ENCODE measurements at regions of chrX and their contacts with region 1.

Region 1: GRCh38 chrX:37986893-37987292 is 19.5 kb upstream of the SYTL5 start:
- DNase-seq: no peak
- ATAC-seq: no peak

Region 2: GRCh38 chrX:37895795-37896510 is 90.9 kb before region 1 on chrX:
- intact Hi-C with region 1: no loop called
- DNase-seq: no peak
- ATAC-seq: no peak

Region 3: DNA sequence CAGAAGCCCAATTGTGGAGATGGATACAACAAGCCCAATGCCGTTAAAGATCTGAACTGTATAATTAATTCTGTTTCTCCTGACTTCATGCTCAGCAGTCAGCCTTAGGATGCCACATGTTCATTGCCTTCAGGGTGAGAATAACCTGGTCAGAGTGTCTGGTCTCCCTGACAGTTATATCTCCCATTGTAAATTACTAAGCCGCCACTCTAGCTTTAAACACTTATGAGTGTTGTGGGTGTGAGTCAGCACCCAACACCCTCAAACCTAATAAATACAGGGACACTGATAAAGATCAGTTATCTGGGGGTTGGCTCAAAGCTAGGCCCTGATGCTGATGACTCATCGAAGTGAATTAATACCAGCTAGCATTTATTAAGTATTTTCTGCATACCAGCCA is 74.6 kb before region 1 on chrX:
- intact Hi-C with region 1: loop called (anchors 10 kb)
- DNase-seq: no peak
- ATAC-seq: no peak

Region 4: DNA sequence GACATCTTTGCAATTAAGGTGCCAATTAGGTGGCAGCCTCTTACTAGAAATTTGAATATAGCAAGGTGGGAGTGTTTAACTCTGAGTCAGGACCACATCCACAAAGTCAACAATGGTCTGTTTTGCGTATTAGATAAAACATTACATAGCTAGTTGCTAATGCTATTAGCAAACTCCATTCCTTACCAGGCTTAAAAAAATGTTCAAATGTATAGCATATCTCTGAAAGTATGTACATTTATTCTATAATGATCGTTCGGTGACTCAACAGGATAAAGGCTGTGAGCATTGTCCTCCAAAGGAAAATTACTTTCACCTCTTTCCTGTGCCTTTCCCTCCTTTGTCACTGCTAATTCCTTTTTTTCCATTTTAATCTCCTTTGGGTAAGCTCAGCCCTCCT is 93.9 kb after region 1 on chrX:
- intact Hi-C with region 1: no loop called
- DNase-seq: no peak
- ATAC-seq: no peak